Left colon (tissue), 2 donors: ENCODE measurements at regions of chr17 and their contacts with region 1.

Region 1: GRCh38 chr17:34781571-34782108 is 179.6 kb downstream of the CCT6B start:
- DNase-seq: no peak
- ATAC-seq: no peak

Region 2: DNA sequence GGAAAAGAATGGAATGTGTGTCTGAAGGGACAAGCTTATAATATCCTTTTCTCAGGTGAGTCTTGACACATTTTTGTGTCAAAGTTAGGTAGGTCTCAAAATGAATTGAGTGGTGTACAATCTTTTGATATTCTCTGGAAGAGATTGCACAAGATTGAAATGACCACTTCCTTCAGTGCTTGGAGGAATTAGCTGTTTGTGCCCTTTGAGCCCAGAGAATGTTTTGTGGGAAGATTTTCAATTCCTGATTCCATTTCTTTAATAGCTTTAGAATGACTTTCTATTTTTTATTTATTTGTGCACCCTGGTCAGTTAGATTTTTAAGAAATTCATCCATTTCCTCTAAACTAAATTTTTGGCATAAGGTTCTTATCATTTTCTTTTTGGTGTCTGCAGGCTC is 427.0 kb before region 1 on chr17:
- intact Hi-C with region 1: no loop called
- DNase-seq: no peak
- ATAC-seq: no peak

Region 3: DNA sequence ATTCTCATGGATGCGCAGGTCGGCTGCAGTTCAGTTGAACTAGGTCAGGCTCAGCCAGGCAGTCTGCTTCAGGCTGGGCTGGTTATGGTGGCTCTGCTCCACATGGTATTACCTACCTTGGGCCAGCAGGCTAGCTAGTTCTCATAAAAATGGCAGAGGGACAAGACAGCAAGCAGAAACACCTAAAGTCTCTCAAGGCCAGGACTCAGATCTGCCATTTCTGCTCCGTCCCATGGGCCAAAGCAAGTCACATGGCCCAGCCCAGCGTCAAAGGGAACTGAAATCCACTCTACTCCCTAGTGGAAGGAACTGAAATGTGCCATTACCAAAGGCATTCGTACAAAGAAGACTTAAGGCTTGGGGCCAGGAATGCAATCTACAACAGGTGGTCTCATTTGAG is 42.3 kb before region 1 on chr17:
- intact Hi-C with region 1: loop called in 1 of 2 experiments (anchors 10 kb)
- DNase-seq: no peak
- ATAC-seq: no peak

Region 4: GRCh38 chr17:34980681-34981537 is 199.3 kb after region 1 on chr17:
- intact Hi-C with region 1: no loop called
- DNase-seq: peak; percentile 65 to 79
- ATAC-seq: peak; percentile 87